ENCODE measurements at regions of chrX and their contacts with region 1.

Region 1: GRCh38 chrX:12701628-12702027 is 89.6 kb upstream of the PRPS2 start:
- DNase-seq: peak; percentile 84
- ATAC-seq: peak; percentile 97
- H3K4me3 ChIP-seq: no peak overlapping the region
- H3K27ac ChIP-seq: no peak overlapping the region
- H3K4me1 ChIP-seq: 0 out of 2 replicates have a peak, but pooled peaks cover 3% of the 10 kb centered on the region
- H3K27me3 ChIP-seq: no peaks in the 10 kb centered on the region
- CTCF ChIP-seq: peak; percentile 79

Region 2: DNA sequence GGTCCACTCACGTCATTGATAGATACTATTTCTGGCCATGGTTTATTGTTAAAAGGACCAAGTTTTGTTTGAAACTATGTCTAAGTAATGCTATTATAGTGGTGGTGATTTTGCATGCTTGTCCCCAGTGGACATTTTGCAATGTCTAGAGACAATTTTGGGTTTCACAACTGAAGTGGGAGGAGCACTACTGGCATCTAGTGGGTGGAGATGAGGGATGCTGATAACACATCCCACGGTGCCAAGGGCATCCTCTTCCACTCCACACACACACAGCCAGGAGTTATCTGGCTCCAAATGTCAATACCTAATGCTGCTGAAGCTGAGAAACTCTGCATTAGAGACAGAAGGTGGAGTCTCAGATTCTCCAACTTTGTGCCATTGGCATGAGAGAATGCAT is 432.1 kb before region 1 on chrX:
- CTCF ChIA-PET with region 1: no interaction called
- POLR2A ChIA-PET with region 1: no interaction called
- intact Hi-C with region 1: loop called (anchors 1 kb)
- DNase-seq: peak; percentile 34
- ATAC-seq: peak; percentile 40; the same call in 1 of the 2 replicates
- H3K4me3 ChIP-seq: no peak overlapping the region
- H3K27ac ChIP-seq: no peak overlapping the region
- H3K4me1 ChIP-seq: no peaks in the 10 kb centered on the region
- H3K27me3 ChIP-seq: no peaks in the 10 kb centered on the region
- CTCF ChIP-seq: peak; percentile 47

Region 3: DNA sequence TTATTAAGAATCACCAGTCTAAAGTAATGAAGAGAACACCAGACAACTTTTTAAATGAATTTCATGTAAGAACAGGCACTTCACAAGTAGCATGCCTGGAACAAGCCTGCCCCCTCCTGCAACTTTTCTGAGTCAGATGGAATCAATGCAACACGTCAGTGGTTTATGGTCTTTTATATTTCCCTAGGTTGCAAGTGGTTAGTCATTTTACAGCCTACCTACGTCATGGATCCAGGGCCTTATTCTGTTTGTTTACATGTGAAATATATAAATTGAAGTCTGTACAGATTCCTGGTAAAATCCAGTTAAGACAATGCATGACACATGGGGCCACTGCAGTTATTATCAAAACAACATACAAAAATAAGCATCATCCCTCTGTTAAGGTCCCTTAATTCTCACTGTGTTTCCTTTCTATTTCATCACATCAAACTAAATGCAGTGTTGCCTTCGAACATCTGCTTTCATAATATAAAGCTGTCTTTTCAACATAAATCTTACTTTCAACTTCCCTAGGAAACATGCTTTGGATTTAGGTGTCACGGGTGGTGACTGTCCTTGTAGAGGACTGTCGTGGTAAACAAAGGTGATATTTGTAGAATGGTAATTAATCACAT is 254.1 kb before region 1 on chrX:
- CTCF ChIA-PET with region 1: no interaction called
- POLR2A ChIA-PET with region 1: no interaction called
- intact Hi-C with region 1: loop called (anchors 2 kb)
- DNase-seq: peak; percentile 80
- ATAC-seq: peak; percentile 93
- H3K4me3 ChIP-seq: no peak overlapping the region
- H3K27ac ChIP-seq: peak overlapping the region; percentile 69
- H3K4me1 ChIP-seq: peaks cover 15% of the 10 kb centered on the region
- H3K27me3 ChIP-seq: no peaks in the 10 kb centered on the region
- CTCF ChIP-seq: peak; percentile 52

Region 4: GRCh38 chrX:12595720-12596119 is 105.9 kb before region 1 on chrX:
- CTCF ChIA-PET with region 1: no interaction called
- POLR2A ChIA-PET with region 1: no interaction called
- intact Hi-C with region 1: loop called (anchors 1 kb)
- DNase-seq: no peak
- ATAC-seq: no peak
- H3K4me3 ChIP-seq: no peak overlapping the region
- H3K27ac ChIP-seq: no peak overlapping the region
- H3K4me1 ChIP-seq: no peaks in the 10 kb centered on the region
- H3K27me3 ChIP-seq: no peaks in the 10 kb centered on the region
- CTCF ChIP-seq: no peak